ENCODE measurements at regions of chr10 and their contacts with region 1.

Region 1: DNA sequence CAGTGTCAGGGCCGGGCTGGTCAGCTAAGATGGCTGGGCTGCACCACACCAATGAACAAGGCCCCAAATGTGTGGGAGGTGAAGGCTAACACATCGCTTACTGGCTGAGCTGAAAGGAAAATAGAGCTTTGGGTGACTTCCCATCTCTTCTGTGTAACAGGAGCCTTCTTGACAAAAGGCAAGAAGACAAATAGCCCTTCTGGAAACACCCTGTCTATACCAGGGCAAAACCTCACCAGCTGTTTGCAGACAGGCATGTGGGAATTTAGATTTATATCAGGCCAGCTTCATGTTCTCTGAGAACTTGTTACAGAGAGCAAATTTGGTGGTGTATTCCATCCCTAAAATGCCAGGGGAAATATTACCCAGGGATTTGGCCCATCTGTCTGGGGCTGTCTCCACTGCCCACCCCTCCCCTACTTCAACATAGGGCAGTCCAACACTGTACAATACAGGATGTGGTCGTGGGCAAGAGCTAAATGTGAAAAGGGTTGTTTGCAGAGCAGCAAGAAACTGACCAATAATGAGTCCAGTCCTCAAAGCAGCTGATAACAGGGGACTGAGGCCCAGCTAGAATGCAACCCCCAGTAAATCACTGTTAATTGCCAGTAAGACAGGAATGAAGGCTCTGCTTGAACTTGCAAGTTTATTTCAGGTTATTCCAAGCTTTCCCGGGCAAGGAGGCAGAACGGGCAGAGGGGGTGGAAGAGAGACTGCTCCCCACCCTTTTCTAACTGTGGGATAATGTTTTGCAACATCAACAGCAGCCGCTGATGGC is 37.1 kb downstream of the AFAP1L2 start:
- DNase-seq: no peak
- ATAC-seq: peak; percentile 40
- H3K4me3 ChIP-seq: no peak overlapping the region
- H3K27ac ChIP-seq: peak overlapping the region; percentile 53 to 72
- H3K4me1 ChIP-seq: peaks cover 0 to 3% of the 10 kb centered on the region in 2 donors
- H3K27me3 ChIP-seq: no peaks in the 10 kb centered on the region

Region 2: DNA sequence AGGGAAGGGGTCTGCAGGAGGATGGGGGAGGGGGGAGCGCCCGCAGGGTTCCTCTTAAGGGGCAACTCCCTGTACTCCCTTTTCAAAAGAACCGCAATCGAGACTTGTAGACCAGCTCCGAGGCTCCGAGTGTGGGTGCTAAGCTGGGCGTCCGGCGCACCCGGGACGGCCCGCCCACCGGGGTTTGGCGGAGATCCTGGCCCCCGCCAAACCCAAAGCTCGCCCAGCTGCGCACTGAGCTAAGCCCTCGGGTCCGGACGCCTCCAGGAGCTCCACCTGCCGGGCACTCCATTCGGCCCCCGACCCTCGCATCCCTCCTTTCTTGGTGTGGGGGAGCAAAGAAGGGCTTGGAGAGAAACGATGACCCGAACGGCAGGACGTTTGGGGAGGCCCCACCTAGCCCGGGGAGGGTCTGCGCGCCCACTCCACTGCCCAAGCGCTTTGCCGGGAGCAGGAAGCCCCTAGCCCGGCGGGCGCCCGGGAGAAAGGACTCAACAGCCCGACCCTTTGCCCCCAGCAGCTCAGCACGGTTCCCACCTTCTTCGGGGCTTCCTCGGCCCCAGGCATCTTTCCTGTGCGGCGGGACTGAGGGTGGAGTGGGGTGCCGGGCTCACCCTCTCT is 36.4 kb after region 1 on chr10:
- intact Hi-C with region 1: loop called in 1 of 2 experiments (anchors 5 kb)
- DNase-seq: peak; percentile 62 to 83
- ATAC-seq: peak; percentile 66
- H3K4me3 ChIP-seq: peak overlapping the region; percentile 57 to 75
- H3K27ac ChIP-seq: no peak overlapping the region
- H3K4me1 ChIP-seq: no peaks in the 10 kb centered on the region
- H3K27me3 ChIP-seq: no peaks in the 10 kb centered on the region

Measured in aorta (tissue), 5 donors.